Left ventricle myocardium superior (tissue), 1 donor: ENCODE measurements at regions of chr4 and their contacts with region 1.

Region 1: GRCh38 chr4:44368413-44369167 is 80.0 kb downstream of the KCTD8 start:
- DNase-seq: no peak
- ATAC-seq: no peak

Region 2: GRCh38 chr4:44194365-44194764 is 174.2 kb before region 1 on chr4:
- intact Hi-C with region 1: no loop called
- DNase-seq: no peak
- ATAC-seq: no peak

Region 3: DNA sequence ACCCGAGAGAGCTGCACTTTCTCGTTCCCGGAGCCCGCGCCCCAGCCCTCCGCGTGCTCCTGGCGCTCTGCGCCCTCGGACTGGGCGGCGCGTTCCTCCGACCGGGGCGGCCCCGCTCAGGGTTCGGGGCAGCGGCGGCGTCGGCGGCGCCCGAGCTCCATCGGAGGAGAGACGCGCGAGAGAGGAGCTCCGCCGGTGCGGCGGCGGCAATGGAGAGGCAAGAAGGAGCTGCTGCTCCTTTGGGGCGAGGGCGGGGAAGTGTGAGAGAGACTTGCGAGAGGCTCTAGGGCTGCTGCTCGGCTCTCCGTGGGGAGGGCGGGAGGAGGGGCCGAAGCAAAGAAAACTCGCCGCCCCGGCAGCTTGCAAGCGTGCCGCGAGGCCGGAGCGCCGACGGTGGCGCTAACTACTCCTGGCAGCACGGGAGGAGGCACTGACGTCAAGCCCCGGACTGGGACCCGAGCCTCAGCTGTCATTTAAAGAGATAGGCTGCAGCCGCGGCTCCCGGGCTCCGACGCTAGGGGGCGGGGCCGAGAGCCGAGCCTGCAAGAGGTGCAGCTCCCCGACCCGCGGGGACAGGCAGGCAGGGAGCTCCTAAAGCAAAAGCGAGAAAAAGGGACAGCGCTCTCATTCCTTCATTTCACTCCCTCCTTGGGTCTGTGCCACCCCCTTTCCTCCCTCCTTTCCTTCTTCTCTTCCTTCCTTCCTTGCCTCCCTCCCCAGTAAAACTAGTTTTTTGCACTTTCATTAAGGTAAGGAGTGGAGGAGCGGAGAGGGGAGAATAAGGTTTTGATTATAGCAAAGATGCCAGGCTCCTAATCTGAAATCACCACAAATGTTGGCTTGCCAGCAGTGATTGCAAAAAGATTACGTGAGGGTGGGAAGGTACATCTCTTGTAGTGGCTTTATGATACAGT is 80.2 kb after region 1 on chr4 and contains the start of gene KCTD8:
- intact Hi-C with region 1: loop called (anchors 2 kb)
- DNase-seq: peak; percentile 90
- ATAC-seq: peak; percentile 97
- total RNA-seq, gene KCTD8: 0.22 TPM